ENCODE measurements at regions of chr20 and their contacts with region 1.

Region 1: DNA sequence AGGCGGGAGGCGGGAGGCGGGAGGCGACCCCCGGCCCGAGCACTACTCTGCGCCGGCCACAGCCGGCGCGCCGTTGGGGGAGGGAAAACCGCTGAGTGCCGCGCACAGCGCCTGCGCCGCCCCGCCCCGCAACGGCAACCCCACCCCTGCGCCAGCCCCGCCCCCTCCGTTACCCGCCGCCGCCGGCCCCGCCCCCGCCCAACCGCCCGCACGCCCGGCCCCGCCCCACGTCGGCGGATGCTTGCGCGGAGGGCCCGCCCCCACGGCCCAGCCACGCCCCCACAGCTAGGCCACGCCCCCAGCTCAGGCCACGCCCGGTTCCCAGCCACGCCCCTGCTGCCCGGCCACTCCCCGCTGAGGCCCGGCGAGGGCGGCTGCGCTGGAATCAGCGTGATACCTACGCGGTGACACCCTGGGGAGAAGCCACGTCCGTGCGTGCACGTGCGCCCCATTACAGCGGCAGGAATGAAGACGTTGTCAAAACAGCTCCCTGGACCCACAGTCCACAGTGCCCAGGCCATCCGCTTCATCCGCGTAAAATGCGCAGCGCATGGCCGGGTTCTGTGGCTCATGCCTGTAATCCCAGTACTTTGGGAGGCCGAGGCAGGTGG is at the start of gene TCFL5:
- DNase-seq: peak; percentile 90 to 100 (median 93)
- ATAC-seq: peak; percentile 98
- H3K4me3 ChIP-seq: no peak within 1 kb of the TSS
- H3K4me3 Mint-ChIP-seq: peak within 1 kb of the TSS; percentile 69 to 84 (median 76)
- H3K27ac ChIP-seq: peak within 1 kb of the TSS; percentile 48
- H3K27ac Mint-ChIP-seq: peak within 1 kb of the TSS; percentile 26 to 91 (median 74)
- H3K4me1 ChIP-seq: peaks cover 9 to 15% of the 10 kb centered on the region in 2 donors
- H3K4me1 Mint-ChIP-seq: peaks cover 10 to 30% (median 22%) of the 10 kb centered on the region in 7 donors
- H3K27me3 ChIP-seq: no peaks in the 10 kb centered on the region
- H3K27me3 Mint-ChIP-seq: peaks cover 0 to 37% (median 0%) of the 10 kb centered on the region in 5 donors
- total RNA-seq, gene TCFL5: 3.7 to 10.8 (median 7.5) TPM

Region 2: DNA sequence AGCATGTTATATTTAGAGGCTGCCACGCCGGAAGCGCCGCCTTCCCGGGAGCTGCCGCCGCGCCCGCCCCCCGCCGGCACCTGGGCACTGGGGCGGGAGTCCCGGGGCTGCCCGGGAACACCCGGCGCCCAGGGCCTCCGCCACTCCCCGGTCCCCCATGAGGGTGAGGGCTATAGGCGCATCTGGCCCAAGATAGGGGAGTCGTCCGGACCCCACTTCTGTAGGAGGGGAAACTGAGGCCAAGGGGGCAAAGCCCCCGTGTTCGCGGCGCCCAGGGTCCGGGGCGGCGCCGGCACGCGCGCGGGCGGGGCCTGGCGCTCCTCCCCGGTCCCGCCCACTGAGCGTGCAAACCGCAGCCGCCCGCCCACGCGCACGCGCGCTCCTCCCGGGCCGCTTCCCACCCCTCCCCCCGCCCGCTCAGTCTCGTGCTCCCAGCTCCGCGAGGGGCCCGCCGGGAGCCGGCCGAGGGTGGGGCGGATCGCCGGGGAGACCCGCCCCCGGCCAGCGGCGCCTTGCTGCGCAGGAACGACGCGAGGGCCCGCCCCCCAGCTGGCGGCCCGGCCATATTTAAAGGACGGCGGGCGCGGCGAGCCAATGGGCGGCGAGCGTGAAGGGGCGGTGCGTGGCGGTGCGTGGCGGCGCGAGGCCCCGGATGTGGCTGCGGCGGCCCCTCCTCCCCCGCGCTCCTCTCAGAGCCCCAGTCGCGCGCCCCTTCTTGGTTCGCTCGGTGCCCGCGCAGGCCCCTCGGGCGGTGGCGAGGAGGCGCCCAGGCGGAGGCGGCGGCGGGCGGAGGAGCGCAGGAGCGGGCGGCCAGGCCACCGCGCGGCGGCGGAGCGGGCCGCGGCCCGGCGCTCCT is 739.8 kb before region 1 on chr20 and contains the start of gene LSM14B:
- CTCF ChIA-PET with region 1: no interaction called
- POLR2A ChIA-PET with region 1: no interaction called
- intact Hi-C with region 1: loop called in 1 of 2 experiments (anchors 5 kb)
- DNase-seq: peak; percentile 94 to 99 (median 96)
- ATAC-seq: peak; percentile 91
- H3K4me3 ChIP-seq: peak within 1 kb of the TSS; percentile 77
- H3K4me3 Mint-ChIP-seq: peak within 1 kb of the TSS; percentile 86 to 96 (median 92)
- H3K27ac ChIP-seq: peak within 1 kb of the TSS; percentile 81
- H3K27ac Mint-ChIP-seq: peak within 1 kb of the TSS; percentile 84 to 97 (median 95)
- H3K4me1 ChIP-seq: peaks cover 33 to 39% of the 10 kb centered on the region in 2 donors
- H3K4me1 Mint-ChIP-seq: peaks cover 42 to 71% (median 59%) of the 10 kb centered on the region in 7 donors
- H3K27me3 ChIP-seq: no peaks in the 10 kb centered on the region
- H3K27me3 Mint-ChIP-seq: no peaks in the 10 kb centered on the region
- total RNA-seq, gene LSM14B: 39.5 to 61.5 (median 41.9) TPM

Region 3: DNA sequence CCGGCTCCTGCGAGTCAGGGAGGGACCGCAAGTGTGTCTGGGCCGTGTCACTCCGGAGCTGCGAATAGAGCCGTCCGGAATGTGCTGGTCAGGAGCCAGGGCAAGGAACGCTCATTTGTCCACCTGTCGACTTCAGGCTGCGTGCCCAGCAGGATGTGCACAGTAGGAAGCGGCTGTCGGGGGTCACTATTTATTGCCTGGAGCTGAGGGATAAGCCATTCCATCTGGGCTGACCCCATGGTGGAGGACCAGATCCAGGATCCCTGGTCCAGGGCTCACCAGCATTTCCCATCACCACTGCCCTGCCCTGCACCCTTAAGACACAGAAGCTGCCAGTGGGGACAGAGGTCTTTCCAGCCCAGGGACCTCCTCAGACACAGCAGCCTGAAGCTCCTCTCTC is 138.5 kb before region 1 on chr20:
- CTCF ChIA-PET with region 1: no interaction called
- POLR2A ChIA-PET with region 1: no interaction called
- intact Hi-C with region 1: no loop called
- DNase-seq: no peak
- ATAC-seq: no peak
- H3K4me3 ChIP-seq: no peak overlapping the region
- H3K4me3 Mint-ChIP-seq: no peak overlapping the region
- H3K27ac ChIP-seq: no peak overlapping the region
- H3K27ac Mint-ChIP-seq: peak overlapping the region in 1 of 9 donors; percentile 33
- H3K4me1 ChIP-seq: no peaks in the 10 kb centered on the region
- H3K4me1 Mint-ChIP-seq: peaks cover 0 to 13% (median 4%) of the 10 kb centered on the region in 7 donors
- H3K27me3 ChIP-seq: no peaks in the 10 kb centered on the region
- H3K27me3 Mint-ChIP-seq: peaks cover 0 to 50% (median 0%) of the 10 kb centered on the region in 5 donors

Region 4: GRCh38 chr20:62808211-62808865 is 53.5 kb before region 1 on chr20:
- CTCF ChIA-PET with region 1: no interaction called
- POLR2A ChIA-PET with region 1: no interaction called
- intact Hi-C with region 1: loop called in 1 of 2 experiments (anchors 1 kb)
- DNase-seq: peak; percentile 58 to 84 (median 71)
- ATAC-seq: peak; percentile 70
- H3K4me3 ChIP-seq: no peak overlapping the region
- H3K4me3 Mint-ChIP-seq: peak overlapping the region in 9 of 10 donors; percentile 18 to 82 (median 57)
- H3K27ac ChIP-seq: peak overlapping the region; percentile 22
- H3K27ac Mint-ChIP-seq: peak overlapping the region in 7 of 9 donors; percentile 13 to 88 (median 65)
- H3K4me1 ChIP-seq: peaks cover 16 to 30% of the 10 kb centered on the region in 2 donors
- H3K4me1 Mint-ChIP-seq: peaks cover 16 to 33% (median 25%) of the 10 kb centered on the region in 7 donors
- H3K27me3 ChIP-seq: no peaks in the 10 kb centered on the region
- H3K27me3 Mint-ChIP-seq: no peaks in the 10 kb centered on the region

Region 5: GRCh38 chr20:62891111-62891510 is 29.3 kb after region 1 on chr20:
- CTCF ChIA-PET with region 1: interaction called, 3 read pairs
- POLR2A ChIA-PET with region 1: interaction called, 7 read pairs
- intact Hi-C with region 1: loop called in 1 of 2 experiments (anchors 2 kb)
- DNase-seq: peak in 7 of 9 donors; percentile 53 to 76 (median 69)
- ATAC-seq: peak; percentile 60
- H3K4me3 ChIP-seq: peak overlapping the region; percentile 21
- H3K4me3 Mint-ChIP-seq: peak overlapping the region; percentile 48 to 78 (median 66)
- H3K27ac ChIP-seq: peak overlapping the region; percentile 68
- H3K27ac Mint-ChIP-seq: peak overlapping the region; percentile 80 to 97 (median 92)
- H3K4me1 ChIP-seq: peaks cover 0 to 32% of the 10 kb centered on the region in 2 donors
- H3K4me1 Mint-ChIP-seq: peaks cover 14 to 54% (median 47%) of the 10 kb centered on the region in 7 donors
- H3K27me3 ChIP-seq: no peaks in the 10 kb centered on the region
- H3K27me3 Mint-ChIP-seq: no peaks in the 10 kb centered on the region

Region 6: GRCh38 chr20:62926239-62927104 is 64.6 kb after region 1 on chr20 and contains the start of gene DIDO1:
- CTCF ChIA-PET with region 1: no interaction called
- POLR2A ChIA-PET with region 1: no interaction called
- intact Hi-C with region 1: loop called (anchors 5 kb)
- DNase-seq: peak; percentile 81 to 93 (median 89)
- ATAC-seq: peak; percentile 92
- H3K4me3 ChIP-seq: peak within 1 kb of the TSS; percentile 84
- H3K4me3 Mint-ChIP-seq: peak within 1 kb of the TSS; percentile 94 to 99 (median 96)
- H3K27ac ChIP-seq: peak within 1 kb of the TSS; percentile 95
- H3K27ac Mint-ChIP-seq: peak within 1 kb of the TSS; percentile 90 to 96 (median 94)
- H3K4me1 ChIP-seq: peaks cover 53 to 57% of the 10 kb centered on the region in 2 donors
- H3K4me1 Mint-ChIP-seq: peaks cover 48 to 74% (median 69%) of the 10 kb centered on the region in 7 donors
- H3K27me3 ChIP-seq: no peaks in the 10 kb centered on the region
- H3K27me3 Mint-ChIP-seq: no peaks in the 10 kb centered on the region
- total RNA-seq, gene DIDO1: 66.1 to 139 (median 77.4) TPM

Region 7: DNA sequence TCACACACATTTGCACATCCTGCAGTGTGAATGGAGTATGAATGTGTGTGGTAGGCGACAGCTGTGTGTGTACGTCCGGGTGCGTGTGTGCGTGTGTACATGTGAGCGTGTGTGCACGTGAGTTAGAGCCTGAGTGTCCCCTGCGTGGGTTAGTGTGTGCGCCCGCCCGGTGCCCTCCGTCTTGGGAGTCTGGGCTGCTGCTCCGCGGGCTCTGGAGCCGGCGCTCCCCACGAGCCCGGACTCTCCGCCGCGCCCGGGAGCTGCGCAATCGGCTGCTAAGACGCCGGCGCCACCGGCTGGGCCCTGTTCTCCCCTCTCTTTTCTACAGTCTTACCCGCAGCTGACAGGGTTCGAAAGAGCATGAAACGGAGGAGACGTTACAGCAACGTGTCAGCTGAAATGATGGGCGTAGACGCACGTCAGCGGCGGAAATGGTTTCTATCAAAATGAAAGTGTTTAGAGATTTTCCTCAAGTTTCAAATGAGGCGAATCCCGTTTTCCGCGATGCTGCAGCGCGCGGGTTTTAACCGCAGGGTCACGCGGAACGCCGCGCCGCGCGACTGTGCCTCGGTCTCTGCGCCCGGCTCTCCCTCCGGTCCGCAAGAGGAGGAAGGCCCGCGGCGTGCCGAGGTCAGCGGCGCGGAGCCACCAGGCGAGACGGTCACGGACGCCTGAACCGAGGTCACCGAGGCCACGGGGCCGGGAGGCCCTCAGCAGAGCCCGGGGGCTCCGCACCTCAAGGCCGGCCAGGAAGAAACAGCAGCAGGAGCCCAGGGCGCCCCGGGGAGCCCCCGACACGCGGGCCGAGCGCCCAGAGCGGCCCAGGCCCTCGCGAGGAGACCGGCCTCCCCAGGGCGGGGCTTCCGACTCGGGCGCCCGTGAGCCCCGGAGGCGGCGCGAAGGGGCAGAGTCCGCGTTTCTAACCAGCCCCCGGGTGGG is 240.2 kb after region 1 on chr20:
- CTCF ChIA-PET with region 1: no interaction called
- POLR2A ChIA-PET with region 1: no interaction called
- intact Hi-C with region 1: loop called in 1 of 2 experiments (anchors 5 kb)
- DNase-seq: peak; percentile 53 to 84 (median 80)
- ATAC-seq: peak; percentile 76
- H3K4me3 ChIP-seq: peak overlapping the region; percentile 84
- H3K4me3 Mint-ChIP-seq: peak overlapping the region; percentile 86 to 95 (median 92)
- H3K27ac ChIP-seq: peak overlapping the region; percentile 88
- H3K27ac Mint-ChIP-seq: peak overlapping the region; percentile 90 to 99 (median 96)
- H3K4me1 ChIP-seq: no peaks in the 10 kb centered on the region
- H3K4me1 Mint-ChIP-seq: peaks cover 0 to 8% (median 5%) of the 10 kb centered on the region in 7 donors
- H3K27me3 ChIP-seq: no peaks in the 10 kb centered on the region
- H3K27me3 Mint-ChIP-seq: no peaks in the 10 kb centered on the region

Measured in naive thymus-derived CD4-positive, alpha-beta T cell (primary cell).